Common myeloid progenitor, CD34-positive (primary cell): ENCODE measurements at regions of chr4 and their contacts with region 1.

Region 1: DNA sequence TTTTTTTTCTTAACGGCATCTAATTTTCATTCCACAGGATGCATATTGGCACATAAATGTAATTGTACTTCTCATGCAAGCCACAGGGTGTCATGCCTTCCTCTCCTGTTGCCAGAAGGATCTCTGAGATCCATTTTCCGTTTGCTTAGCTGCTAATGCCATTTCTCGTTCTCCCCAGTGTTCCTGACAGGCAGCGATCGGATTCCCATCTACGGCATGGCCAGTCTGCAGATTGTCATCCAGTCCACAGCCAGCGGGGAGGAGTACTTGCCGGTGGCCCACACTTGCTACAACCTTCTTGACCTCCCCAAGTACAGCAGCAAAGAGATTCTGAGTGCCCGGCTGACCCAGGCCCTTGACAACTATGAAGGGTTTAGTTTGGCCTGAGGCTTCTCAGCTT is 8.9 kb upstream of the NAP1L5 start:
- DNase-seq: peak in 2 of 3 donors; percentile 43 to 45
- H3K4me3 ChIP-seq: no peak overlapping the region
- H3K27ac ChIP-seq: no peak overlapping the region
- H3K4me1 ChIP-seq: no peaks in the 10 kb centered on the region
- H3K27me3 ChIP-seq: no peaks in the 10 kb centered on the region

Region 2: DNA sequence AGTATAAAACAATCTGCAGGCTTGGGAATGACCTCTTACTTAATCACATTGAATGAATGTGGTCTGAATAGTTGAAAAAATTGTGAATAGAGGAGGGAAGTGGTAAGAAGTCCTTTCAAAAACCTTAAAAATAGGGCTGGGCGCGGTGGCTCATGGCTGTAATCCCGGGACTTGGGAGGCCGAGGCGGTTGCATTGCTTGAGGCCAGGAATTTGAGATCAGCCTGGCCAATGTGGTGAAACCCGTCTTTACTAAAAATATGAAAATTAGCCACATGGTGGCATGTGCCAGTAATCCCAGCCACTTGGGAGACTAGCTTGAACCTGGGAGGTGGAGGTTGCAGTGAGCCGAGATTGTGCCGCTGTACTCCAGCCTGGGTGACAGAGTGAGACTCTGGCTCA is 77.8 kb before region 1 on chr4:
- CTCF ChIA-PET with region 1: no interaction called
- POLR2A ChIA-PET with region 1: no interaction called
- DNase-seq: no peak
- H3K4me3 ChIP-seq: no peak overlapping the region
- H3K27ac ChIP-seq: no peak overlapping the region
- H3K4me1 ChIP-seq: no peaks in the 10 kb centered on the region
- H3K27me3 ChIP-seq: no peaks in the 10 kb centered on the region

Region 3: DNA sequence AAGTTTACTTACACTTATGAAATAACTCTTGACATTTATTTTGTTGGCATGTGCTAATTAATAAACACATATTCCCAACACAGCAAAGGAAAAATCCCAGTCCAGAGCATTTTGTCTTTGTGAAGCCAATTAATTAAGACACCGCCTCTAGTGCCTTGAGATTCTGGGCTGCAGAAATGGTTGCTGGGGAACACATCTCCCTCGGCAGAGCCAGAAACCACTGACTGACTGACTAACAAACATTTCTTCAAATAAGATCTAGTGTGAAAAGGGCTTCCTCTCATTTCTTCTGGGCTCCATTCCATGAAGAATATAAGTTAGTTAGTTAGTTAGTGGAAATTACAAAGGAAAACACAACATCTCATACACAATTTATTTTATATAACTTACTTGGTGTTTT is 19.4 kb after region 1 on chr4:
- CTCF ChIA-PET with region 1: interaction called, 10 read pairs
- POLR2A ChIA-PET with region 1: no interaction called
- DNase-seq: no peak
- H3K4me3 ChIP-seq: no peak overlapping the region
- H3K27ac ChIP-seq: no peak overlapping the region
- H3K4me1 ChIP-seq: peaks cover 0 to 17% (median 4%) of the 10 kb centered on the region in 4 experiments
- H3K27me3 ChIP-seq: no peaks in the 10 kb centered on the region